Heart left ventricle (tissue), 16 donors: ENCODE measurements at regions of chr2 and their contacts with region 1.

Region 1: DNA sequence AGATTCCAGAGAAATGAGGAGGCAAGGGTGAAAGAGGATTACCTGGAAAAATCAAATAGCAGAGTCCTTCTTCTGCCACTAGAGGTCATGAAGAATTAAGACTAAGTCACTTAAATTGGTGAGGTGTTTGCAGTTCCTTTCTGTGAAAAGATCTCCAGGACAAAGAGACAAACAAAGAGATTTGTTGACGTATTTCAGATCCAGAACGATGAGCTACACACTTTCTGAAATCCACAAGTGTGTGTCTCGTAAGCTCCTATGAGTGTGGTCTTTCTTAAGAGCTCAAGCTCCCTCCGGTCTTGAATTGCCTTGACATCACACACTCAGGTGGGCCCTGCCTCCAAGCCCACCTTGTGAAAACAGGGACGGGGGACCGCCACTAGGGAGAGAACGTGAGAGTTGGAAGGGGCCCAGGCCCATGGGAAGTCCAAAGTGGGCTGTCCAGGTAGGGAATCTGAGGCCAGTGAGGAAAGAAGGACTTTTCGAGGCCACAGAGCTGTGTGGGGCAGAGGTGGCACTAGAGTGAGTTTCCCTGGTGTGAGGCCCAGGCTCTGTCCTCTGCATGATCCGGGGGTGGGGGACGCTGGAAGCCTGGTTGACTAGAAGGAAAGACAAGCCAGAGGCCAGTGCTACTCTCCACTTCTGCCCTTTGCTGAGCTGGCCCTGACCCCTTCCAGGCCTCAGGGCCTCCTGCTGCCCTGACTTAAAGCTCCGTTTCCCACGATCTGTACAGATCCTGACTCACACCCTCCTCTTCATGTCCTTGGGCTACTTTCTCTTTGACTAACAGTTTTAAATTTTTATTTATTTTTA is 168.1 kb upstream of the NCK2 start:
- DNase-seq: peak in 2 of 5 donors; percentile 34 to 44
- ATAC-seq: peak; percentile 38 to 71 (median 59)
- H3K4me3 ChIP-seq: peak overlapping the region in 1 of 12 donors; percentile 20
- H3K27ac ChIP-seq: peak overlapping the region in 6 of 12 donors; percentile 2 to 60 (median 31)
- H3K4me1 ChIP-seq: peaks cover 0 to 26% (median 7%) of the 10 kb centered on the region in 12 donors
- H3K27me3 ChIP-seq: no peaks in the 10 kb centered on the region
- CTCF ChIP-seq: peak; percentile 43 to 75 (median 64)
- POLR2A ChIP-seq: no peak

Region 2: GRCh38 chr2:105888625-105889400 is 312.2 kb after region 1 on chr2:
- intact Hi-C with region 1: loop called in 3 of 10 experiments (anchors 5 to 10 kb)
- DNase-seq: peak in 2 of 5 donors; percentile 38 to 40
- ATAC-seq: peak; percentile 13 to 38 (median 29)
- H3K4me3 ChIP-seq: no peak overlapping the region
- H3K27ac ChIP-seq: peak overlapping the region in 3 of 12 donors; percentile 1 to 20 (median 14)
- H3K4me1 ChIP-seq: peaks cover 5 to 72% (median 38%) of the 10 kb centered on the region in 12 donors
- H3K27me3 ChIP-seq: no peaks in the 10 kb centered on the region
- CTCF ChIP-seq: peak in 2 of 12 donors; percentile 11 to 20
- POLR2A ChIP-seq: no peak

Region 3: DNA sequence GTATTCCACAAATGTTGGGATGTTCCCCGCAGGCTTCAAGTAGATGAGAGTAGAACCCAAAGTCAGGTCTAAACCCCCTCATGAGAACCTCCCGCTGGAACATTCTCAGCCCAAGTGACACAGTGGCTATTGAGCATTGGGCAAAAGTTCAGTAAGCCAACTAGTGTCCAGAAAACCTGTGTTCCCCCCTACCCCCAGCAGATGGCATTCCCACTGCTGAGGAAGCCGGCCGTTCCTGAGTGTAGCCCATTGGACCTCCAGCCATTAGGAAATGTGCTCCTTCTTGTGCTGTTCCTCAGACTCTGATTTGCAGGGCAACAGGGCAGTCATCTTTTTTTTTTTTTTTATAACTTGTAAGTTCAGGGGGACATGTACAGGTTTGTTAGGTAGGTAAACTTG is 320.1 kb after region 1 on chr2:
- intact Hi-C with region 1: loop called in 1 of 10 experiments (anchors 10 kb)
- DNase-seq: no peak
- ATAC-seq: no peak
- H3K4me3 ChIP-seq: no peak overlapping the region
- H3K27ac ChIP-seq: no peak overlapping the region
- H3K4me1 ChIP-seq: peaks cover 0 to 18% (median 0%) of the 10 kb centered on the region in 12 donors
- H3K27me3 ChIP-seq: no peaks in the 10 kb centered on the region
- CTCF ChIP-seq: peak in 3 of 12 donors; percentile 7 to 24 (median 23)
- POLR2A ChIP-seq: no peak

Region 4: DNA sequence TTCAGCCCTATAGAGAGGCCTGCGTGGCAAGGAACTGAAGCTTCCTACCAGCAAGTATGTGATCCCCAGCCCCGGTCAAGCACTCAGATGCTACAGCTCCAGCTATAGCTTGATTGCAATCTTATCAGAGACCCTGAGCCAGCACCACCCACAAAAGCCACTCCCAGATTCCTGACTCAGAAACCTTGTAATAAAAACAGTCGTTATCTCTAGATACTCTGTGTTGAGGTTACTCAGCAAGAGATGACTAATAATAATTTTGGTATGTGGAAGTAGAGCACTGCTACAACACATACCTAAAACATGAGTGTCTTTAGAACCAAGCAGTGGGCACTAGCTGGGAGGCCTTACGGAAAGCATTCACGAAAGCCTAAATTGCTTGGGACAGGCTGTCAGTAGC is 400.6 kb after region 1 on chr2:
- intact Hi-C with region 1: loop called in 2 of 10 experiments (anchors 10 kb)
- DNase-seq: no peak
- ATAC-seq: no peak
- H3K4me3 ChIP-seq: no peak overlapping the region
- H3K27ac ChIP-seq: no peak overlapping the region
- H3K4me1 ChIP-seq: no peaks in the 10 kb centered on the region
- H3K27me3 ChIP-seq: no peaks in the 10 kb centered on the region
- CTCF ChIP-seq: no peak
- POLR2A ChIP-seq: no peak

Region 5: DNA sequence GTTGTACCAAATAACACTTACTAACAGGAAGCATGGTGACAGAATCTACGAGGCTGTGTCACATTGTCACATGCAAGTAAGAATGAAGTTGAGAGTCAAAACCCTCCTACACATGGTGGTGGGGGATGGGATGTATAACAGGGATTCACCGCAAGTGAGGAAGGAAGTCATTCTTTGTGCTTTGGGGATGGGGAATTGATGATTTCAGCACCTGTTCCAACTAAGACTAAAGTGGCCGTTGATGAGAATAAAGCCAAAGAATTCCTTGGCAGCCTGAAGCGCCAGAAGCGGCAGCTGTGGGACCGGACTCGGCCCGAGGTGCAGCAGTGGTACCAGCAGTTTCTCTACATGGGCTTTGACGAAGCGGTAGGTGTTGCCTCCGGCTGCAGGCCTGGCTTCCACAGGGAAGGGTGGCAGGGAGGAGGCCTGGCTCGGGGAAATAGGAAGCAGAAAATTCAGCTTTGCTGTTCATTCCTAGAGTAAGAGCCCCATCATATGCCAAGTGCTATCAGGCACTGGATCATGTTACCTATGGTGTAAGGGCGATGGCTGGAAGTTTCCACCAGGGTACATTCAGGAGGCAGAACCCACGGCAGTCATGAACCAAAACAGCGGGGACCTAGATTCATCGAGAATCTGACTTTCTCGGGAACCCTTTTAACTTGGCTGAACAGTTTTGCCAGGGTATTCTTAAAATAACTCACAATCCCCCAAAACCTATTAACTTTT is 497.2 kb after region 1 on chr2:
- intact Hi-C with region 1: loop called in 1 of 10 experiments (anchors 5 kb)
- DNase-seq: no peak
- ATAC-seq: peak in 1 of 4 donors; percentile 74
- H3K4me3 ChIP-seq: no peak overlapping the region
- H3K27ac ChIP-seq: no peak overlapping the region
- H3K4me1 ChIP-seq: peaks cover 0 to 12% (median 0%) of the 10 kb centered on the region in 12 donors
- H3K27me3 ChIP-seq: no peaks in the 10 kb centered on the region
- CTCF ChIP-seq: no peak
- POLR2A ChIP-seq: no peak

Region 6: DNA sequence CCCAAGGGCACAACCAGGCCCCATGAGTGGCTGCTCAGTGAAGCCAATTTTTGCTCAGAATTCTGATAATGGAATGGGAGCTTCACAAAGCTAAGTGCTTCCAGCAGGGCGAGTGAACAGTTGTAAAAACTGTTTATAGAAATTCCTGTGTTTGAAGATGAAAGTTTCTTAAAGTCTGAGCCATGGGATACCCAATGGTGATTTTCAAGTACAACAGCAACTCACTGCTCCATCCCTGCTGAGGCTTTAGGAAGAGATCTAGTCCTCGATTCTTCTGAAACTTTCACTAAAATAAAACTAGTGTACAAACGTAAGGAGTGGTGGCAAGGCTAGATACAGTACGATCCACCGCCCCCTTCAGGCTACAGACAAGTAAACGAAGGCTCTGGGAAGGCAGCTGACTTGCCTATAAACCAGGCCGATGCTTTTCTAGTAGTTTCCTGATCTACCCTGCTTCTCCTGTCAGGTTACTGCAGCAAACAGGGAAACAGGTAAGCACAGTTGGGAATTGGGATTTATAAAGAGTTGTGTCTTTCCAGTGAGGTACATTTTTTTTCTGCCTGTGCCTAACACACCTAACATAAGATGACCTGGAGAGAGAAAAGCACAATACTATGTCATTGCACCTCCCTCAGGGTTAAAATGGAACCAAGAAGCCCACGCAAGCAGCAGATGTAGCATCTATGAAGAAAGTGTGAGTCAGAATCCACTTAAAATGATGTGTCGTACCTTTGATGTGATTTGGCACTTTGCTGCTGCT is 508.7 kb after region 1 on chr2:
- intact Hi-C with region 1: loop called in 9 of 10 experiments (anchors 5 to 10 kb)
- DNase-seq: peak in 3 of 5 donors; percentile 48 to 55 (median 51)
- ATAC-seq: peak in 3 of 4 donors; percentile 61 to 84 (median 72)
- H3K4me3 ChIP-seq: no peak overlapping the region
- H3K27ac ChIP-seq: peak overlapping the region in 1 of 12 donors; percentile 7
- H3K4me1 ChIP-seq: peaks cover 0 to 7% (median 0%) of the 10 kb centered on the region in 12 donors
- H3K27me3 ChIP-seq: no peaks in the 10 kb centered on the region
- CTCF ChIP-seq: peak; percentile 19 to 67 (median 47)
- POLR2A ChIP-seq: no peak

Region 7: DNA sequence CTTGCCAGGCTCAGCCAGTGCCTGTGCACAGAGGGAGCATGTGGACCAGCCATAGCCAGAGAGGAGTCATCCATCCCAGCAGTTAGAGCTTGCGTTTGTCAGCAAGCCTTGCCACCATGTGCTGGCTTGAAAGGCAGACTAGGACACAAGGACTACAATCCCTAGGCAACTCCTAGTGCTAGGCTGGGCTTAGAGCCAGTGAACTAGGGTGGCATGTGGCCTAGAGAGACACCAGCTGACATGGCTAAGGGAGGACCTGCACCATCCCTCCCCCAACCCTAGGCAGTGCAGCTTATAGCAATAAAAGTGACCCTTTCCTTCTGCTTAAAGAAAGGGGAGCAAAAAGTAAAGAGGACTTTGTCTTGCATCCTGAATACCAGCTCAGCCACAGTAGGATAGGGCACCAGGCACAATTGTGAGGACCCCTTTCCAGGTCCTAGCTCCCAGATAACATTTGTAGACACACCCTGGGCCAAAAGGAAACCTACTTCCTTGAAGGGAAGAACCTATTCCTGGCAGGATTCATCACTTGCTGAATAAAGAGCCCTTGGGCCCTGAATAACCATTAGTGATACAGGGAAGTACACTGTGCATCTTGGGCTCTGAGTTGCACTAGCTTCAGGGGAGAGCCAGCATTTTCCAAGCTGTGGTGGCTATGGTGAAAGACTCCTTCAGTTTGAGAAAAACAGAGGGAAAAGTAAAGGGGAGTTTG is 656.1 kb after region 1 on chr2:
- intact Hi-C with region 1: no loop called
- DNase-seq: peak in 4 of 5 donors; percentile 51 to 78 (median 63)
- ATAC-seq: peak; percentile 96 to 99 (median 98)
- H3K4me3 ChIP-seq: no peak overlapping the region
- H3K27ac ChIP-seq: peak overlapping the region in 1 of 12 donors; percentile 30
- H3K4me1 ChIP-seq: peaks cover 0 to 3% (median 0%) of the 10 kb centered on the region in 12 donors
- H3K27me3 ChIP-seq: no peaks in the 10 kb centered on the region
- CTCF ChIP-seq: no peak
- POLR2A ChIP-seq: no peak

Region 8: DNA sequence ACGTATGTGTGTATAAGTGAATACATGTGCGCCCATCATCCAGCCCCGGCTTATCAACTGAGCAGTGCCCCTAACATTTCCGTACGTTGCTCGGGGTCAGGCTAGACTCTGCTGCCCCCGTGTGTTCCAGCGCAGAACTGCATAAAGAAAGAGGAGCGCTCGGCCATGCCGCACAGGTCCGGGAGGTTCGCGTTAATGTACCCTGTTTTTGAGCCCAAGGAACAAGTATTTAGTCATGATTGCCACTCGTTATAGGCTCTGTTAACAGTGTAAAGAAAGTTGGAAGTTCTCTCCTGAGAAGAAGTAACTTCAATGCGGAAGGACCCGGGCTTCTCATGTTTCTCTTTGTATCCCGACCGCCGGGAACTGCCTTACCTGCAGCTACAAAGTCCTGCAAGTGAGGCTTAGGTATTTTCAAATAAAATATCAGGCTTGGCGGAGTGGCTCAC is 966.2 kb after region 1 on chr2:
- intact Hi-C with region 1: loop called in 1 of 10 experiments (anchors 5 kb)
- DNase-seq: peak; percentile 45 to 71 (median 61)
- ATAC-seq: peak; percentile 58 to 88 (median 80)
- H3K4me3 ChIP-seq: peak overlapping the region in 9 of 12 donors; percentile 18 to 38 (median 29)
- H3K27ac ChIP-seq: no peak overlapping the region
- H3K4me1 ChIP-seq: peaks cover 0 to 22% (median 0%) of the 10 kb centered on the region in 12 donors
- H3K27me3 ChIP-seq: peaks cover 0 to 23% (median 4%) of the 10 kb centered on the region in 9 donors
- CTCF ChIP-seq: peak; percentile 83 to 98 (median 92)
- POLR2A ChIP-seq: no peak